ENCODE measurements at regions of chr20 and their contacts with region 1.

Region 1: GRCh38 chr20:5410470-5410869 is 93.7 kb upstream of the PROKR2 start:
- DNase-seq: no peak
- ATAC-seq: no peak
- H3K4me3 ChIP-seq: no peak overlapping the region
- H3K27ac ChIP-seq: no peak overlapping the region
- H3K4me1 ChIP-seq: no peaks in the 10 kb centered on the region
- H3K27me3 ChIP-seq: peaks cover 0 to 6% (median 0%) of the 10 kb centered on the region in 7 donors
- CTCF ChIP-seq: no peak

Region 2: DNA sequence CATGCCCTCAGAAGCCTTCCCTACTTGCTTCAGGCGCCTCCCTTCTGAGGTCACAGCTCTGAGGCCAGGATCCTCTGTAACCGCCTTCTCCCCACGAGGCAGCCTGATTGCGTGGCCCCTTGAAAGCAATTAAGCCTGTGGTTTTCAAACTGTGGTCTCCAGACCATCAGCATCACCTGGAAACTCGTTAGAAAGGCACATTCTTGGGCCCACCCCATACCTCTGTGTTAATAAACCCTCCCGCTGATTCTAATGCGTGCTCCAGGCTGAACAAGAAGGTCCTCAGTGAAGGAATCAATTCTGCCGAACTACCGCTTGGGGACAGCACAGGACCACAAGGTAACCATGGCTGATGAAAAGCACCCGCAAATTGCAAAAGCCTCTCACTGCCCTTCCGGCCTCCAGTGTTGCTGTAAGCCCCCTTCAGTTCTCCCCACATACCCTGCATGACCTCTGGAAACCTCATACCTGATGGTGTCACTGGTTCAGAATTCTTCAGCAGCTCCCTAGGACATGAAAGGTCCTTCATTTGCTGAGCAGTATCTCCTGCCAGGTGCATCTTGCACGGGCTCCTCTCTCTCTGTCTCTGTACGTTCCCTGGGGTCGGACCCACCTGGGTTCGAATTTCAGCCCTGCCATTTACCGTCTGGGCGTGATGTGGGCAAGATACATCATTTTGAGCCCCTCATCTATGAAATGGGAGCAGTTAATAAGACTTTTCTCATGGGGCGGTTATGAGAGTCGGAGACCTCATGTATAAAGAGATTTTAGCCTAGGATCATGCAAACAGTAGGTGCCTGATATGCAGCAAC is 1301.8 kb before region 1 on chr20:
- intact Hi-C with region 1: no loop called
- DNase-seq: peak; percentile 32 to 73
- ATAC-seq: peak; percentile 83 to 91 (median 87)
- H3K4me3 ChIP-seq: no peak overlapping the region
- H3K27ac ChIP-seq: no peak overlapping the region
- H3K4me1 ChIP-seq: peaks cover 0 to 29% (median 14%) of the 10 kb centered on the region in 9 donors
- H3K27me3 ChIP-seq: no peaks in the 10 kb centered on the region
- CTCF ChIP-seq: peak; percentile 91 to 99 (median 96)

Region 3: DNA sequence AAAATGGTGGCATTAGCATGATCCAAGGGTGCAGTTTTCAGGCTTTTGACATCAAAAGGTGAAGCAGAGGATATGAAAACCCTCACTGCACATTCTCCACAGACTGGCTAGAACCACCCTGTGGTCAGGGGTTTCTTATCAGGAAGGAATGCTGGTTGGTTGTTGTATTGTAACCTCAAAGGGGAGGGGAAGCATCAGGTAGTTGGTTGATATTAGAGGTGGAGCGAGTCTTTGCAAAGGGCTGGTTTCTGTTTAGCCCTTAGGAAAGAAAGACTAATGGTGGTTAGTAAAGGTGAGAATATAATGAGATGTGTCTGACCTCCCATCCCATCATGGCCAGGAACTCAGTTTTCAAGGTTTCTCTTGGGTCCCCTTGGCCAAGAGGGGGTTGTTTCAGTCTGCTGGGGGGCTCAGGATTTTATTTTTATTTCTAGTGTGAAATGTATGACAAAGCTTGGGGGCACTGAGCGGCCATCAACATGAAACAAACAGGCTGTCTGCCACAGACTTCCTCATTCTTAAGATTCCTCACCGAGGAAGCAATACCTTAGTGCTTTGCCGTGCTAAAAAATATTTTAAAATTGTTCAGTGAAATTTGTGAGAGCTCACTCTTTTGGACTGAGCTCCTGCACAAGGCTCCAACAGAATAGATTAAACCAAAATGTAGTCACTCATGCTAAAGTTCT is 46.2 kb before region 1 on chr20:
- intact Hi-C with region 1: loop called in 1 of 10 experiments (anchors 5 kb)
- DNase-seq: no peak
- ATAC-seq: no peak
- H3K4me3 ChIP-seq: no peak overlapping the region
- H3K27ac ChIP-seq: no peak overlapping the region
- H3K4me1 ChIP-seq: no peaks in the 10 kb centered on the region
- H3K27me3 ChIP-seq: peaks cover 0 to 6% (median 0%) of the 10 kb centered on the region in 7 donors
- CTCF ChIP-seq: no peak

Measured in heart right ventricle (tissue), 16 donors.